ENCODE measurements at regions of chr10 and their contacts with region 1.

Region 1: DNA sequence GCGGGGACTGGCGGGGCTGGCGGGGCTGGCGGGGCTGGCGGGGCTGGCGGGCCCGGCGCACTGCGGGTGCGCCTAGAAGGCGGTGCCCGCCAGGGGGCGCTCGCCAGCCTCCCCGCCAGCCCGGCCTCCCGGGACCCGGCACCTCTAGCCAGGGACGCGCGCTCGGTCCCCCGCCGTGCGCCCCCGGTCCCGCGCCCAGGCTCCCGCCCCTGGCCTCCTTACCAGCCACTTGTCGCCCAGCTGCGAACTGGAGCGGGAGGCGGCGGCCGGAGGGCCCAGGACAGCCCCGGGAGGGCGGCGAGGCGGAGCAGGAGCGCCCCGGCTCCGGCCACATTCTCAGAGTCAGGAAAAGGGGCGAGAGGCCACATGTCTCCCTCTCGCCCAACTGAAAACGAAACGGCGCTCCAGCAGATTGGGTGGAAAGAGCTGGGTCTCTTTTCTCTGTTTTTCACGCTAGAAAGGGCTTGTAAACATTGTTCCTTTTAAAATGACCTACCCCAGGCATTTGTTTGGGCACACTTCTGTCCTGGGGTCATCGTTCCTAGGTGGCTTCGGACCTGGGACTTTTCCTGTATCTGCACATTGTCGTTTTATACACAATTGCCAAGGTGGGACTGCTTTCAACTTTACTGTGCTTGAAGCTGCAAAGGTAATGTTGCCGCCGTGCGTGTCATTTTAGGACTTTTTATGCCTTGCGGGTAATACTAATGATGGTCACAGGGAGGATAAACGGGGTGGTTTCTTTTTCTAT is 378 bp upstream of the PRKCQ start:
- DNase-seq: peak; percentile 65 to 93 (median 86)
- ATAC-seq: peak; percentile 63
- H3K4me3 ChIP-seq: peak overlapping the region; percentile 87
- H3K4me3 Mint-ChIP-seq: peak overlapping the region; percentile 94
- H3K27ac ChIP-seq: peak overlapping the region; percentile 67 to 93
- H3K27ac Mint-ChIP-seq: peak overlapping the region; percentile 94
- H3K4me1 ChIP-seq: peaks cover 43% of the 10 kb centered on the region
- H3K4me1 Mint-ChIP-seq: peaks cover 80% of the 10 kb centered on the region
- H3K27me3 ChIP-seq: no peaks in the 10 kb centered on the region
- H3K27me3 Mint-ChIP-seq: no peaks in the 10 kb centered on the region
- CTCF ChIP-seq: peak; percentile 32

Region 2: GRCh38 chr10:5252177-5253015 is 1328.1 kb before region 1 on chr10:
- CTCF ChIA-PET with region 1: no interaction called
- POLR2A ChIA-PET with region 1: no interaction called
- intact Hi-C with region 1: no loop called
- DNase-seq: peak in 1 of 14 experiments; percentile 30
- ATAC-seq: no peak
- H3K4me3 ChIP-seq: no peak overlapping the region
- H3K4me3 Mint-ChIP-seq: no peak overlapping the region
- H3K27ac ChIP-seq: no peak overlapping the region
- H3K27ac Mint-ChIP-seq: no peak overlapping the region
- H3K4me1 ChIP-seq: no peaks in the 10 kb centered on the region
- H3K4me1 Mint-ChIP-seq: no peaks in the 10 kb centered on the region
- H3K27me3 ChIP-seq: no peaks in the 10 kb centered on the region
- H3K27me3 Mint-ChIP-seq: no peaks in the 10 kb centered on the region
- CTCF ChIP-seq: no peak

Region 3: GRCh38 chr10:6445501-6446316 is 134.7 kb before region 1 on chr10:
- CTCF ChIA-PET with region 1: interaction called, 3 read pairs
- POLR2A ChIA-PET with region 1: no interaction called
- intact Hi-C with region 1: loop called in 1 of 2 experiments (anchors 1 kb)
- DNase-seq: peak; percentile 27 to 79 (median 61)
- ATAC-seq: peak; percentile 64
- H3K4me3 ChIP-seq: no peak overlapping the region
- H3K4me3 Mint-ChIP-seq: no peak overlapping the region
- H3K27ac ChIP-seq: no peak overlapping the region
- H3K27ac Mint-ChIP-seq: peak overlapping the region; percentile 68
- H3K4me1 ChIP-seq: peaks cover 11% of the 10 kb centered on the region
- H3K4me1 Mint-ChIP-seq: peaks cover 30% of the 10 kb centered on the region
- H3K27me3 ChIP-seq: no peaks in the 10 kb centered on the region
- H3K27me3 Mint-ChIP-seq: no peaks in the 10 kb centered on the region
- CTCF ChIP-seq: peak; percentile 77

Region 4: DNA sequence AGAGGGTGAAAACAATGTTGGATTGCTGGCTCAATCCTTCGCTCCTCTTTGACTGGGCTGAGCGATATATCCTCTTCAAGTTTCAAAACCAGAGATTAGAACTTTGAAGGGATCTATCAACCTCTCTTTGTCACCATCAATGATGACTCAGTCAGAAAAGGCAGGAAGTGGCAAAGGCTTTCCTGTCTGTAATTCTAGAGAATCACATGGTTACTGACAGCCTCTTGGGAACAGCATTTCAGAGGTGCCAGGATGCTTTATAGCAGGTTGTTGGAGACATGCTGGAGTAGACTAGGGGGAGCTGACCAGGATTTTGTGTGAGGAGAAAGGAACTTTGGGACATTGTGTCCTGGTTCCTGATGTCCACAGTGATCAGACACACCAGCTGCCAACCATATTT is 81.7 kb before region 1 on chr10:
- CTCF ChIA-PET with region 1: interaction called, 4 read pairs
- POLR2A ChIA-PET with region 1: interaction called, 5 read pairs
- intact Hi-C with region 1: loop called in 1 of 2 experiments (anchors 5 kb)
- DNase-seq: peak in 8 of 14 experiments; percentile 17 to 91 (median 47)
- ATAC-seq: peak; percentile 75
- H3K4me3 ChIP-seq: no peak overlapping the region
- H3K4me3 Mint-ChIP-seq: peak overlapping the region; percentile 55
- H3K27ac ChIP-seq: peak overlapping the region; percentile 55 to 63
- H3K27ac Mint-ChIP-seq: peak overlapping the region; percentile 90
- H3K4me1 ChIP-seq: peaks cover 41% of the 10 kb centered on the region
- H3K4me1 Mint-ChIP-seq: peaks cover 42% of the 10 kb centered on the region
- H3K27me3 ChIP-seq: no peaks in the 10 kb centered on the region
- H3K27me3 Mint-ChIP-seq: no peaks in the 10 kb centered on the region
- CTCF ChIP-seq: no peak

Region 5: GRCh38 chr10:6530211-6530840 is 50.1 kb before region 1 on chr10:
- CTCF ChIA-PET with region 1: interaction called, 4 read pairs
- POLR2A ChIA-PET with region 1: interaction called, 41 read pairs
- intact Hi-C with region 1: loop called in 1 of 2 experiments (anchors 2 kb)
- DNase-seq: peak; percentile 61 to 94 (median 77)
- ATAC-seq: peak; percentile 97
- H3K4me3 ChIP-seq: peak overlapping the region; percentile 48
- H3K4me3 Mint-ChIP-seq: peak overlapping the region; percentile 86
- H3K27ac ChIP-seq: peak overlapping the region; percentile 85 to 86
- H3K27ac Mint-ChIP-seq: peak overlapping the region; percentile 95
- H3K4me1 ChIP-seq: peaks cover 73% of the 10 kb centered on the region
- H3K4me1 Mint-ChIP-seq: peaks cover 85% of the 10 kb centered on the region
- H3K27me3 ChIP-seq: no peaks in the 10 kb centered on the region
- H3K27me3 Mint-ChIP-seq: no peaks in the 10 kb centered on the region
- CTCF ChIP-seq: no peak

Region 6: GRCh38 chr10:6563075-6563474 is 17.4 kb before region 1 on chr10:
- CTCF ChIA-PET with region 1: interaction called, 4 read pairs
- POLR2A ChIA-PET with region 1: interaction called, 17 read pairs
- intact Hi-C with region 1: loop called in 1 of 2 experiments (anchors 1 kb)
- DNase-seq: peak in 6 of 14 experiments; percentile 13 to 64 (median 50)
- ATAC-seq: peak; percentile 58
- H3K4me3 ChIP-seq: peak overlapping the region; percentile 21
- H3K4me3 Mint-ChIP-seq: peak overlapping the region; percentile 82
- H3K27ac ChIP-seq: peak overlapping the region; percentile 50 to 66
- H3K27ac Mint-ChIP-seq: peak overlapping the region; percentile 81
- H3K4me1 ChIP-seq: peaks cover 71% of the 10 kb centered on the region
- H3K4me1 Mint-ChIP-seq: peaks cover 90% of the 10 kb centered on the region
- H3K27me3 ChIP-seq: no peaks in the 10 kb centered on the region
- H3K27me3 Mint-ChIP-seq: no peaks in the 10 kb centered on the region
- CTCF ChIP-seq: no peak

Region 7: DNA sequence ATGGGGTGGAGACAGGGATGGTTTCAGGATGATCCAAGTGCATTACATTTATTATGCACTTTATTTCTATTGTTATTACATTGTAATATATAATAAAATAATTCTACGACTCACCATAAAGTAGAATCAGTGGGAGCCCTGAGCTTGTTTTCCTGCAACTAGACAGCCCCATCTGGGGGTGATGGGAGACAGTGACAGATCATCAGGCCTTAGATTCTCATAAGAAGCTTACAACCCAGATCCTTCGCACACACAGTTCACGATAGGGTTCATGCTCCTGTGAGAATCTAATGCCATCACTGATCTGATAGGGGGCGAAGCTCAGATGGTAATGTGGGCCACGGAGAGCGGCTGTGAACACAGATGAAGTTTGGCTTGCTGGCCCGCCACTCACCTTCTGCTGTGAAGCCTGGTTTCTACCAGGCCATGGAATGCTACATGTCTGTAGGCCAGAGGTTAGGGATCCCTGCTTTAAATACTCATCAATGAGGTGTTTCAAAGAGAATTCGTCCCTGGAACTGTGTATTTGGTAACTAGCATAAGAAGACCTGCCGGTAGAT is 20.9 kb after region 1 on chr10:
- CTCF ChIA-PET with region 1: interaction called, 55 read pairs
- POLR2A ChIA-PET with region 1: interaction called, 104 read pairs
- intact Hi-C with region 1: loop called (anchors 1 to 2 kb)
- DNase-seq: peak in 8 of 14 experiments; percentile 36 to 60 (median 54)
- ATAC-seq: peak; percentile 67
- H3K4me3 ChIP-seq: no peak overlapping the region
- H3K4me3 Mint-ChIP-seq: peak overlapping the region; percentile 71
- H3K27ac ChIP-seq: no peak overlapping the region
- H3K27ac Mint-ChIP-seq: peak overlapping the region; percentile 83
- H3K4me1 ChIP-seq: peaks cover 35% of the 10 kb centered on the region
- H3K4me1 Mint-ChIP-seq: peaks cover 80% of the 10 kb centered on the region
- H3K27me3 ChIP-seq: no peaks in the 10 kb centered on the region
- H3K27me3 Mint-ChIP-seq: no peaks in the 10 kb centered on the region
- CTCF ChIP-seq: peak; percentile 79

Region 8: DNA sequence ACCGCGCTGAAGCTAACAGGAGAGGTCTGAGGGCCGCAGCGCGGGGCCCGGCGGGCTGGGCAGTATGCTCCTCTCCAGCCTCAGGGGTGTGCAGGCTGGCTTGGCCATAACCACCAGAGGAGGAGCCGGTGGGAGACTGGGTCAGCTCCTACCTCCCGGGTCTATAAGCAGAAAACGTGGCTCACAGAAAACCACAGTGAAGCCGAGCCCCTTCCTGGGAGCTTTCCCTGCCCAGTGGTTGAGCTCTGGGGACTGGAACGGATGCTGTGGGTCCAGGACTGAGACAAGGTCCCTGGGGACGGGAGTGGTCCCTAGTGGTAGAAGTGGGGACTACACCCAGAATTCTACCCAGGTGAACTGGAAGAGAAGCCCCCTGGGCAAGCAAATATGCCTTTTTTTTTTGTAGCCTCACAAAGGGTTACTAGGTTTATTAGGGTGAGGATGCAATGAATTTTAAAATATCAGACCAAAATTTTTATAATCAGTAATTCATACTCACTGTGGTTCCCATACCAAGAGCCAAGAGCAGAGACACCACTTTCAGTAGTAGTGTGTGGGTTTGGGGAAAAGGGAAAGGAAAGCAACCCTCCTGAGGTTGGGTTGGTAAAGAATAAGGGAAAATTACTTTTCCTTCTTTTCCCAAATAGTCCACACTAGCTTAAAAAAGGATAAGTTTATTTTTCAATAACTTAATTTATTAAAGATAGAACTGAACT is 67.5 kb after region 1 on chr10:
- CTCF ChIA-PET with region 1: interaction called, 6 read pairs
- POLR2A ChIA-PET with region 1: interaction called, 6 read pairs
- intact Hi-C with region 1: loop called (anchors 1 to 5 kb)
- DNase-seq: peak; percentile 41 to 82 (median 60)
- ATAC-seq: peak; percentile 97
- H3K4me3 ChIP-seq: no peak overlapping the region
- H3K4me3 Mint-ChIP-seq: no peak overlapping the region
- H3K27ac ChIP-seq: no peak overlapping the region
- H3K27ac Mint-ChIP-seq: no peak overlapping the region
- H3K4me1 ChIP-seq: peaks cover 16% of the 10 kb centered on the region
- H3K4me1 Mint-ChIP-seq: peaks cover 17% of the 10 kb centered on the region
- H3K27me3 ChIP-seq: no peaks in the 10 kb centered on the region
- H3K27me3 Mint-ChIP-seq: no peaks in the 10 kb centered on the region
- CTCF ChIP-seq: peak; percentile 93